Prostate gland (tissue), 2 donors: ENCODE measurements at regions of chr4 and their contacts with region 1.

Region 1: GRCh38 chr4:73729534-73730165 is 10.7 kb upstream of the CXCL8 start:
- DNase-seq: peak; percentile 62
- H3K4me3 ChIP-seq: no peak overlapping the region
- H3K27ac ChIP-seq: no peak overlapping the region
- H3K4me1 ChIP-seq: no peaks in the 10 kb centered on the region
- H3K27me3 ChIP-seq: no peaks in the 10 kb centered on the region
- CTCF ChIP-seq: peak; percentile 41 to 78 (median 71)
- POLR2A ChIP-seq: no peak

Region 2: GRCh38 chr4:73853246-73853704 is 123.6 kb after region 1 on chr4 and contains the start of gene PF4V1:
- intact Hi-C with region 1: loop called (anchors 10 kb)
- DNase-seq: peak; percentile 21
- H3K4me3 ChIP-seq: peak within 1 kb of the TSS; percentile 12 to 15
- H3K27ac ChIP-seq: no peak within 1 kb of the TSS
- H3K4me1 ChIP-seq: no peaks in the 10 kb centered on the region
- H3K27me3 ChIP-seq: no peaks in the 10 kb centered on the region
- CTCF ChIP-seq: peak in 2 of 4 experiments; percentile 28 to 37
- POLR2A ChIP-seq: no peak
- total RNA-seq, gene PF4V1: not detected

Region 3: DNA sequence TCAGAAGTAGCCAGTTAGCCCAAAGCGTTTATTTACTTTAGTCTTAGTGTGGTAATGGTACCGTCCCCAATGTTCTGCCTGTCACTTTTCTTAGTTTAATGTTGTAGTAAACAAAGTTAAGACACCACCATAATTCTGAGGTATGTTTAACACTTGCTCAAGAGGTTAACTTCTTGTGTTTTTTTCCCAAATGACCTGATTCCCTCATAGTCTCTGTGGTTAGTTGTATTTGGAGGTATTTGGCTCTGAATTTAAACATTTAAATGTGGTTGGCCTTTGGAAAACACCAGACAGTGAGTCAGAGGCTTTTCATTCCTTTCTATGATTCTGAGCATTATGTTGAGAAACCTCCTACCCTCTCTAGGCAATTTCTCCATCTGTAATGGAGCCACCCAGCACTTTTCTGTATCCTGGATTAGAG is 187.4 kb after region 1 on chr4:
- intact Hi-C with region 1: loop called (anchors 5 kb)
- DNase-seq: no peak
- H3K4me3 ChIP-seq: no peak overlapping the region
- H3K27ac ChIP-seq: peak overlapping the region; percentile 7 to 36
- H3K4me1 ChIP-seq: peaks cover 6% of the 10 kb centered on the region
- H3K27me3 ChIP-seq: no peaks in the 10 kb centered on the region
- CTCF ChIP-seq: no peak
- POLR2A ChIP-seq: no peak